HCT116 (cell line): ENCODE measurements at regions of chr14 and their contacts with region 1.

Region 1: DNA sequence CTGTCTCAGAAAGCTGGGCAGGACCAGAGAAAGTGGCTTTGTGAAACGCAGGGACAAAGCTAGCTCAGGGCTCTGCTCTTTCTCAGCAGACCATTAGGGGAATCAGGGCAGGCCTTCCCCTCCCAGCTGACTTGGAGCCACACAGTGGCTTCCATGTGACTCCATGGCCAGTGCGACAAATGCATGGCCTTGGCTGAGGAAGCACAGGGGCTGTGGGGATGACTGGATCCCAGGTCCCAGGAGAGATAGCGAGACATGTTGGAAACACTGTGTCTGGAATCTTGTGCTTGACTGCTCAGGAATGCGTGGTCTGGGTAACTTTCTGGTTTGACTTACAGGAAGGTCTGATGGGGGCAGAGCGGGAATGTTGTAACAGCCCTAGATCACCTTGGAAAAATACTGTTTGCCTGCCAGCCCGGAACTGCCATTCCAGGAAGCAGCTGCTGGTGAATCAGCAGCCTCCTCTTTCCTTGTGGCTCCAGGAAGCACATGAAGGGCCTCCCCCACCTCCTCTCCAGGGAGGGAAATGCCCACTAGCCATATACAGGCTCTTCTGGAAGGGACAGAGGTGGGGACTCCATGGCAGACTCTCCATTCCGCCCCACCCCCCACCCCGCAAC is 133.5 kb upstream of the HIF1A start:
- DNase-seq: peak; percentile 82
- ATAC-seq: peak; percentile 31
- H3K4me3 ChIP-seq: peak overlapping the region in 1 of 2 experiments; percentile 40; a peak in 2 of 4 replicates
- H3K27ac ChIP-seq: peak overlapping the region; percentile 97
- H3K4me1 ChIP-seq: peaks cover 85 to 87% of the 10 kb centered on the region in 2 experiments
- H3K27me3 ChIP-seq: no peaks in the 10 kb centered on the region
- CTCF ChIP-seq: no peak
- POLR2A ChIP-seq: peak; percentile 38
- RAD21 ChIP-seq: no peak

Region 2: DNA sequence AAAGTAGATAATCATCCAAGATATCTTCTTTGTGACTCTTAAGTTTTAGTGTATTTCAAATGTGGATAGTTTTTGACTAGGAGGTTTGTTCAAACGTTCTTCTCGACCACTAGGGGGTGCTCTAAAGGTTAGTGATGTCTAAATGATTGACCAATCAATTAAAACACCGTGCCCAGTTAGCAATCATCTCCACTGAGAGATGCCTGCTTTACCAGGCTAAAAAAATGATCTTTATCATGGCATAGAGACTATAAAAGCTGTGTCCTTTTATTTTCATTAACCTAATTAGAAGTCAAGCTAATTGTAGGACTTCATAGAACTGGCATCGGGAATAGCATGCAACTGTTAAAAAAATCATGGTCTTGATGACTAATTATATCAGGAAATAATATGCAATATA is 86.5 kb before region 1 on chr14:
- CTCF ChIA-PET with region 1: interaction called, 3 read pairs
- POLR2A ChIA-PET with region 1: interaction called, 5 read pairs
- RAD21 ChIA-PET with region 1: no interaction called
- intact Hi-C with region 1: loop called (anchors 5 kb)
- DNase-seq: peak; percentile 56
- ATAC-seq: peak; percentile 62
- H3K4me3 ChIP-seq: no peak overlapping the region
- H3K27ac ChIP-seq: no peak overlapping the region
- H3K4me1 ChIP-seq: peaks cover 47 to 54% of the 10 kb centered on the region in 2 experiments
- H3K27me3 ChIP-seq: no peaks in the 10 kb centered on the region
- CTCF ChIP-seq: peak; percentile 56 to 89 (median 65); a peak in 5 of 6 replicates
- POLR2A ChIP-seq: no peak
- RAD21 ChIP-seq: peak; percentile 85

Region 3: GRCh38 chr14:61525293-61526011 is 36.3 kb before region 1 on chr14:
- CTCF ChIA-PET with region 1: interaction called, 3 read pairs
- POLR2A ChIA-PET with region 1: interaction called, 17 read pairs
- RAD21 ChIA-PET with region 1: interaction called in 1 of 2 experiments, 5 read pairs
- intact Hi-C with region 1: loop called (anchors 1 kb)
- DNase-seq: peak; percentile 97
- ATAC-seq: peak; percentile 85
- H3K4me3 ChIP-seq: peak overlapping the region in 1 of 2 experiments; percentile 15; a peak in 2 of 4 replicates
- H3K27ac ChIP-seq: peak overlapping the region; percentile 92
- H3K4me1 ChIP-seq: peaks cover 63 to 66% of the 10 kb centered on the region in 2 experiments
- H3K27me3 ChIP-seq: no peaks in the 10 kb centered on the region
- CTCF ChIP-seq: no peak
- POLR2A ChIP-seq: no peak
- RAD21 ChIP-seq: peak; percentile 13; the same call in 1 of the 2 replicates

Region 4: GRCh38 chr14:61537563-61538463 is 24.0 kb before region 1 on chr14:
- CTCF ChIA-PET with region 1: interaction called, 3 read pairs
- POLR2A ChIA-PET with region 1: interaction called, 41 read pairs
- RAD21 ChIA-PET with region 1: interaction called, 4 to 5 read pairs
- intact Hi-C with region 1: no loop called
- DNase-seq: peak; percentile 95
- ATAC-seq: peak; percentile 86
- H3K4me3 ChIP-seq: peak overlapping the region in 1 of 2 experiments; percentile 12; a peak in 3 of 4 replicates
- H3K27ac ChIP-seq: peak overlapping the region; percentile 90
- H3K4me1 ChIP-seq: peaks cover 61 to 65% of the 10 kb centered on the region in 2 experiments
- H3K27me3 ChIP-seq: no peaks in the 10 kb centered on the region
- CTCF ChIP-seq: no peak
- POLR2A ChIP-seq: no peak
- RAD21 ChIP-seq: peak; percentile 45

Region 5: GRCh38 chr14:61694830-61695694 is 133.3 kb after region 1 on chr14 and contains the start of gene HIF1A:
- CTCF ChIA-PET with region 1: no interaction called
- POLR2A ChIA-PET with region 1: interaction called, 9 read pairs
- RAD21 ChIA-PET with region 1: no interaction called
- intact Hi-C with region 1: loop called (anchors 2 kb)
- DNase-seq: peak; percentile 94
- ATAC-seq: peak; percentile 94
- H3K4me3 ChIP-seq: peak within 1 kb of the TSS; percentile 88 to 95
- H3K27ac ChIP-seq: peak within 1 kb of the TSS; percentile 92
- H3K4me1 ChIP-seq: peaks cover 11 to 27% of the 10 kb centered on the region in 2 experiments; a peak in 3 of 4 replicates
- H3K27me3 ChIP-seq: no peaks in the 10 kb centered on the region
- CTCF ChIP-seq: no peak
- POLR2A ChIP-seq: peak; percentile 96
- RAD21 ChIP-seq: peak; percentile 31
- total RNA-seq, gene HIF1A: 113 TPM